Esophagus muscularis mucosa (tissue), 4 donors: ENCODE measurements at regions of chr7 and their contacts with region 1.

Region 1: GRCh38 chr7:105876091-105876963 is at the start of gene ATXN7L1:
- DNase-seq: peak; percentile 97
- H3K4me3 ChIP-seq: peak within 1 kb of the TSS; percentile 66 to 84 (median 82)
- H3K27ac ChIP-seq: peak within 1 kb of the TSS; percentile 85 to 93 (median 88)
- H3K4me1 ChIP-seq: peaks cover 18 to 65% (median 44%) of the 10 kb centered on the region in 4 donors
- H3K27me3 ChIP-seq: no peaks in the 10 kb centered on the region
- CTCF ChIP-seq: peak; percentile 45 to 80 (median 75)
- EP300 ChIP-seq: peak; percentile 35
- POLR2A ChIP-seq: peak; percentile 34
- total RNA-seq, gene ATXN7L1: 4.6 to 12.5 (median 10.1) TPM

Region 2: GRCh38 chr7:105769901-105770628 is 106.3 kb before region 1 on chr7:
- intact Hi-C with region 1: loop called (anchors 5 kb)
- DNase-seq: no peak
- H3K4me3 ChIP-seq: no peak overlapping the region
- H3K27ac ChIP-seq: peak overlapping the region in 3 of 4 donors; percentile 36 to 57 (median 49)
- H3K4me1 ChIP-seq: peaks cover 0 to 48% (median 38%) of the 10 kb centered on the region in 4 donors
- H3K27me3 ChIP-seq: no peaks in the 10 kb centered on the region
- CTCF ChIP-seq: no peak
- EP300 ChIP-seq: no peak
- POLR2A ChIP-seq: no peak

Region 3: DNA sequence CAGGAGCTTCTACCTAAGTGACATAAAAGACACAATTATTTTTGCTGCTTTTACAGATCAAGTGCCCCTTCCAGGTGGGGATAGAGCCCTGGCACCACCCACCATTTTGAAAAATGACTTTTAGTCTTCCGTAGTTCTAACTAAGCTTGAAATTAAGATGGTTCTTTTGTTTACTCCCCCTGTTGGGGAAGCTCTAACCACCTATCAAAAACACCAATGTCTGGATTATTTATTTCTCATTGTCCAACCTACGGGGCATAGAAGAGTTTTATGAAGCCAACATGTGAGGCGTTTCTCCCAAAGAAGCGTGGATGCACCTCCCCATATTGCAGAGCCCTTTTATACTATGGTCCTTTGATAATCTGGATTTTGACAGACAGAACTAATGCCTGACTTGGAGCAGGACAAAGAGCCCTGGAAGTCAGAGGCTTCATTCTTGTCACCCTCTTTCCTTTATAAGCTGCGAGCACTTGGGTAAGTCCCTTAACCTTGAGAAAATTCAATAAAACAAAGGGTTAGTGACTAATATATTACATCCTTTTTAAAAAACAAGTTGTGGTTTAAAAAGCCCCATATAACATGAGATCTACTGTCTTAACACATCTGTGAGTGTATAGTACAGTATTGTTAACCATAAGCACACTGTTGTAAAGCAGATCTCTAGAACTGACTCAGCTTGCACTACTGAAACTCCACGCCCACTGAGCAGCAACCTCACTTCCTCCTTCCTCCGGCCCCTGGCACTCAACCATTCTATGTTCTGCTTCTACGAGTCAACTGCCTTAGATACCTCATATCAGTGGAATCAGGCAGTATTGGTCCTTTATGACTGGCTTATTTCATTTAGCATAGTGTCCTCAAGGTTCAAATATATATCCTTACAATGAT is 67.4 kb before region 1 on chr7:
- intact Hi-C with region 1: no loop called
- DNase-seq: no peak
- H3K4me3 ChIP-seq: no peak overlapping the region
- H3K27ac ChIP-seq: no peak overlapping the region
- H3K4me1 ChIP-seq: peaks cover 0 to 37% (median 27%) of the 10 kb centered on the region in 4 donors
- H3K27me3 ChIP-seq: no peaks in the 10 kb centered on the region
- CTCF ChIP-seq: no peak
- EP300 ChIP-seq: no peak
- POLR2A ChIP-seq: no peak

Region 4: GRCh38 chr7:106009403-106010226 is 133.3 kb after region 1 on chr7:
- intact Hi-C with region 1: loop called (anchors 1 kb)
- DNase-seq: peak; percentile 95
- H3K4me3 ChIP-seq: peak overlapping the region; percentile 12 to 46 (median 26)
- H3K27ac ChIP-seq: peak overlapping the region; percentile 69 to 84 (median 78)
- H3K4me1 ChIP-seq: peaks cover 7 to 50% (median 42%) of the 10 kb centered on the region in 4 donors
- H3K27me3 ChIP-seq: no peaks in the 10 kb centered on the region
- CTCF ChIP-seq: peak; percentile 95 to 99 (median 98)
- EP300 ChIP-seq: no peak
- POLR2A ChIP-seq: no peak

Region 5: GRCh38 chr7:106041140-106041717 is 164.9 kb after region 1 on chr7:
- intact Hi-C with region 1: loop called (anchors 5 kb)
- DNase-seq: no peak
- H3K4me3 ChIP-seq: no peak overlapping the region
- H3K27ac ChIP-seq: no peak overlapping the region
- H3K4me1 ChIP-seq: peaks cover 2 to 21% (median 16%) of the 10 kb centered on the region in 4 donors
- H3K27me3 ChIP-seq: no peaks in the 10 kb centered on the region
- CTCF ChIP-seq: peak; percentile 44 to 72 (median 49)
- EP300 ChIP-seq: no peak
- POLR2A ChIP-seq: no peak